Esophagus muscularis mucosa (tissue), 4 donors: ENCODE measurements at regions of chr3 and their contacts with region 1.

Region 1: GRCh38 chr3:149163066-149163465 is 33.6 kb downstream of the HPS3 start:
- DNase-seq: no peak
- H3K4me3 ChIP-seq: no peak overlapping the region
- H3K27ac ChIP-seq: no peak overlapping the region
- H3K4me1 ChIP-seq: no peaks in the 10 kb centered on the region
- H3K27me3 ChIP-seq: no peaks in the 10 kb centered on the region
- CTCF ChIP-seq: no peak
- EP300 ChIP-seq: no peak
- POLR2A ChIP-seq: no peak

Region 2: DNA sequence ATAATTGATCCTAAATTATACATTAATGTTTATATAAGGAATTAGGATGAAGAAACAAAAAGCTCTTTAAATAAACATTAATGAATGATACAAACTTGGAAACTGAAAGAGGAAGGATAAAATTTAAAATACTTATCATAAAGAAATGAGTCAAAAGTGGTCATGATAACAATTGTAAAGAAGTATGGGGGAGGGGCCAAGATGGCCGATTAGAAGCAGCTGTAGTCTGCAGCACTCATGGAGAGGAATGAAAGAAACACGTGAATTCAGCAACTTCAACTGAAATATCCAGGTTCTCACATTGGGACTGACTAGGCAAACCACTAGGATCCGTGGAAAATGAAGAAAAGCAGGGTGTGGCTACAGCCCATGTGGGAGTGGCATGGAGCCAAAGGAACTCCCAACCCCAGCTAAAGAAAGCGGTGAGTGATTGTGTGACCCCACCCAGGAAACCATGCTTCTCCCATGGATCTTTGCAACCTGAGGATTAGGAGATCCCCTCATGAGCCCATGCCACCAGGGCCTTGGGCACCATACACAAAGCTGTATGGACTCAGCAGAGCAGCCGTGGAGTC is 71.7 kb after region 1 on chr3:
- intact Hi-C with region 1: loop called (anchors 10 kb)
- DNase-seq: no peak
- H3K4me3 ChIP-seq: no peak overlapping the region
- H3K27ac ChIP-seq: no peak overlapping the region
- H3K4me1 ChIP-seq: peaks cover 0 to 4% (median 0%) of the 10 kb centered on the region in 4 donors
- H3K27me3 ChIP-seq: no peaks in the 10 kb centered on the region
- CTCF ChIP-seq: no peak
- EP300 ChIP-seq: no peak
- POLR2A ChIP-seq: no peak

Region 3: GRCh38 chr3:149245738-149246451 is 82.8 kb after region 1 on chr3:
- intact Hi-C with region 1: no loop called
- DNase-seq: no peak
- H3K4me3 ChIP-seq: peak overlapping the region in 2 of 4 donors; percentile 10 to 31
- H3K27ac ChIP-seq: peak overlapping the region in 2 of 4 donors; percentile 10 to 40
- H3K4me1 ChIP-seq: peaks cover 9 to 32% (median 29%) of the 10 kb centered on the region in 4 donors
- H3K27me3 ChIP-seq: no peaks in the 10 kb centered on the region
- CTCF ChIP-seq: no peak
- EP300 ChIP-seq: no peak
- POLR2A ChIP-seq: no peak